Naive thymus-derived CD4-positive, alpha-beta T cell (primary cell): ENCODE measurements at regions of chr18 and their contacts with region 1.

Region 1: GRCh38 chr18:2958819-2959298 is 54.1 kb downstream of the LPIN2 start:
- DNase-seq: peak in 1 of 9 donors; percentile 61
- ATAC-seq: no peak
- H3K4me3 ChIP-seq: peak overlapping the region; percentile 8
- H3K4me3 Mint-ChIP-seq: peak overlapping the region; percentile 1 to 85 (median 66)
- H3K27ac ChIP-seq: peak overlapping the region; percentile 68
- H3K27ac Mint-ChIP-seq: peak overlapping the region; percentile 96 to 100 (median 99)
- H3K4me1 ChIP-seq: peaks cover 83 to 85% of the 10 kb centered on the region in 2 donors
- H3K4me1 Mint-ChIP-seq: peaks cover 46 to 97% (median 93%) of the 10 kb centered on the region in 7 donors
- H3K27me3 ChIP-seq: no peaks in the 10 kb centered on the region
- H3K27me3 Mint-ChIP-seq: no peaks in the 10 kb centered on the region

Region 2: DNA sequence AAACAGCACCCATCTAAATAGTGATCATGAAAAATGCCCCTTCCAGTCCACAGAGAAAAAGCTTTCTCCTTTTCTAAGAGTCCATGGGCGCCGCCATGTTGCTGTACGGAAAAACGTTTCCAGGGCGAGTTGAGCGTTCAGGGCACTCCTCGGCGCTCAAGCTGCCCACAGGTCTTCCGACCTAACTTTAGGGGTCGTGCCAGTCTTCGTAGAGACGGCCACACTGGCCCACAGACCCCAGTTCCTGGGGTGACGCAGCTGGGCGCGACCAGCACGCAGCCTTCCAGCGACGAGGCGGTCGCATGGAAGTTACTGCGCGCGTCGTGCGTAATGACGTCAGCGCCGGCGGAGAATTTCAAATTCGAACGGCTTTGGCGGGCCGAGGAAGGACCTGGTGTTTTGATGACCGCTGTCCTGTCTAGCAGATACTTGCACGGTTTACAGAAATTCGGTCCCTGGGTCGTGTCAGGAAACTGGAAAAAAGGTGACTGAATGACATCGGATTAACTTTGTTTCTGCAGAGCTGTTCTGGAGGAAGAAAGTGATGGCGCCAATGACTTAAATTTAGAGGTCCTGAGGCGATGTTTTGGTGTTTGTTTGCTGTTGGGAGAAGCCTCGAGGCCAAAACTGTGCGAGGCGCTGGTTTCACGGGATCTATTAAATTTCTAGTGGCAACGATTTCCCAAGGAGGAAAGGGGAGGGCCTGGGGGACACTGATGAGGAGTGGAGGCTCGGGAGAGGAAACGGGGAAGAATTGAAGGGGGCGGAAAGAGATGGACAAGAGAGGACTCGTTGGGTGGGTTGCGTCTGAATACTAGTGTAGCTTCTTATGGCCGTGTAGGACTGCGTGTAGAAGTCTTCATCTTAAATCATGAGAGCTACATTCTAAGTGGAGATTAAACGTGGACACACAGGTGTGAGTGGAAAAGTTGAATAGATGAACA is 387.4 kb before region 1 on chr18 and contains the starts of genes METTL4 and NDC80:
- CTCF ChIA-PET with region 1: no interaction called
- POLR2A ChIA-PET with region 1: no interaction called
- intact Hi-C with region 1: loop called in 1 of 2 experiments (anchors 10 kb)
- DNase-seq: peak; percentile 70 to 90 (median 82)
- ATAC-seq: peak; percentile 87
- H3K4me3 ChIP-seq: peak within 1 kb of the TSS; percentile 88
- H3K4me3 Mint-ChIP-seq: peak within 1 kb of the TSS; percentile 96 to 100 (median 99)
- H3K27ac ChIP-seq: peak within 1 kb of the TSS; percentile 97
- H3K27ac Mint-ChIP-seq: peak within 1 kb of the TSS; percentile 98 to 100 (median 100)
- H3K4me1 ChIP-seq: peaks cover 10 to 13% of the 10 kb centered on the region in 2 donors
- H3K4me1 Mint-ChIP-seq: peaks cover 38 to 63% (median 59%) of the 10 kb centered on the region in 7 donors
- H3K27me3 ChIP-seq: no peaks in the 10 kb centered on the region
- H3K27me3 Mint-ChIP-seq: no peaks in the 10 kb centered on the region
- total RNA-seq, gene METTL4: 13.8 to 32.5 (median 22.8) TPM
- total RNA-seq, gene NDC80: 2.4 to 53.6 (median 2.7) TPM

Region 3: GRCh38 chr18:2932247-2933181 is 26.3 kb before region 1 on chr18:
- CTCF ChIA-PET with region 1: interaction called, 5 read pairs
- POLR2A ChIA-PET with region 1: interaction called, 11 read pairs
- intact Hi-C with region 1: loop called in 1 of 2 experiments (anchors 1 kb)
- DNase-seq: peak in 7 of 9 donors; percentile 60 to 79 (median 73)
- ATAC-seq: peak; percentile 84
- H3K4me3 ChIP-seq: no peak overlapping the region
- H3K4me3 Mint-ChIP-seq: peak overlapping the region in 8 of 10 donors; percentile 1 to 30 (median 10)
- H3K27ac ChIP-seq: peak overlapping the region; percentile 49
- H3K27ac Mint-ChIP-seq: peak overlapping the region; percentile 68 to 95 (median 89)
- H3K4me1 ChIP-seq: peaks cover 7 to 8% of the 10 kb centered on the region in 2 donors
- H3K4me1 Mint-ChIP-seq: peaks cover 14 to 49% (median 33%) of the 10 kb centered on the region in 7 donors
- H3K27me3 ChIP-seq: no peaks in the 10 kb centered on the region
- H3K27me3 Mint-ChIP-seq: no peaks in the 10 kb centered on the region

Region 4: DNA sequence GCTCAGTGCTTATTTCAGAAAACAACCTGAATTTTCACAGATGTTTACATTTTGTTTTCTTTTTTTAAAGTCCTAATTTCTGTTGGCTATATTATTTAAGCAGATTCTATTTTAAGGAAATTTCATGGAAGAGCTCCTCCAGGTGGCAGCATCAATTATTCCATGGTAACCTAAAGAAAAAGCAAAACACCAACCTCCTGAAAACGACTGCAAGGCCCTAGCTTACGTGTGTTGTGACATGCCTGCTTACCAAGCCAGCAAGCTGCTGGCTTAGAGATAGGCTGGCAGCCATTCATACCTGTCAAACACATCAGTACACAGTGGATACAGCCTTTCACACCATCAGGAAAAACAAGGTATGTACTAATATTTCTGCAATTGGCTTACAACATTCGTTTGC is 10.8 kb before region 1 on chr18:
- CTCF ChIA-PET with region 1: interaction called, 15 read pairs
- POLR2A ChIA-PET with region 1: interaction called, 28 read pairs
- intact Hi-C with region 1: loop called in 1 of 2 experiments (anchors 1 kb)
- DNase-seq: no peak
- ATAC-seq: no peak
- H3K4me3 ChIP-seq: no peak overlapping the region
- H3K4me3 Mint-ChIP-seq: no peak overlapping the region
- H3K27ac ChIP-seq: no peak overlapping the region
- H3K27ac Mint-ChIP-seq: peak overlapping the region in 5 of 9 donors; percentile 19 to 74 (median 35)
- H3K4me1 ChIP-seq: peaks cover 3 to 24% of the 10 kb centered on the region in 2 donors
- H3K4me1 Mint-ChIP-seq: peaks cover 16 to 81% (median 66%) of the 10 kb centered on the region in 7 donors
- H3K27me3 ChIP-seq: no peaks in the 10 kb centered on the region
- H3K27me3 Mint-ChIP-seq: no peaks in the 10 kb centered on the region

Region 5: GRCh38 chr18:2978646-2979045 is 19.8 kb after region 1 on chr18:
- CTCF ChIA-PET with region 1: interaction called, 27 read pairs
- POLR2A ChIA-PET with region 1: interaction called, 335 read pairs
- intact Hi-C with region 1: loop called (anchors 1 kb)
- DNase-seq: no peak
- ATAC-seq: no peak
- H3K4me3 ChIP-seq: peak overlapping the region; percentile 69
- H3K4me3 Mint-ChIP-seq: peak overlapping the region; percentile 34 to 94 (median 84)
- H3K27ac ChIP-seq: peak overlapping the region; percentile 76
- H3K27ac Mint-ChIP-seq: peak overlapping the region; percentile 83 to 98 (median 91)
- H3K4me1 ChIP-seq: peaks cover 48 to 57% of the 10 kb centered on the region in 2 donors
- H3K4me1 Mint-ChIP-seq: peaks cover 57 to 85% (median 76%) of the 10 kb centered on the region in 7 donors
- H3K27me3 ChIP-seq: no peaks in the 10 kb centered on the region
- H3K27me3 Mint-ChIP-seq: no peaks in the 10 kb centered on the region

Region 6: GRCh38 chr18:2994603-2995432 is 36.0 kb after region 1 on chr18:
- CTCF ChIA-PET with region 1: interaction called, 49 read pairs
- POLR2A ChIA-PET with region 1: interaction called, 151 read pairs
- intact Hi-C with region 1: no loop called
- DNase-seq: peak; percentile 57 to 83 (median 77)
- ATAC-seq: peak; percentile 92
- H3K4me3 ChIP-seq: peak overlapping the region; percentile 35
- H3K4me3 Mint-ChIP-seq: peak overlapping the region; percentile 41 to 80 (median 68)
- H3K27ac ChIP-seq: peak overlapping the region; percentile 62
- H3K27ac Mint-ChIP-seq: peak overlapping the region; percentile 54 to 91 (median 84)
- H3K4me1 ChIP-seq: peaks cover 38 to 47% of the 10 kb centered on the region in 2 donors
- H3K4me1 Mint-ChIP-seq: peaks cover 48 to 87% (median 83%) of the 10 kb centered on the region in 7 donors
- H3K27me3 ChIP-seq: no peaks in the 10 kb centered on the region
- H3K27me3 Mint-ChIP-seq: no peaks in the 10 kb centered on the region